Breast epithelium (tissue), 4 donors: ENCODE measurements at regions of chr6 and their contacts with region 1.

Region 1: DNA sequence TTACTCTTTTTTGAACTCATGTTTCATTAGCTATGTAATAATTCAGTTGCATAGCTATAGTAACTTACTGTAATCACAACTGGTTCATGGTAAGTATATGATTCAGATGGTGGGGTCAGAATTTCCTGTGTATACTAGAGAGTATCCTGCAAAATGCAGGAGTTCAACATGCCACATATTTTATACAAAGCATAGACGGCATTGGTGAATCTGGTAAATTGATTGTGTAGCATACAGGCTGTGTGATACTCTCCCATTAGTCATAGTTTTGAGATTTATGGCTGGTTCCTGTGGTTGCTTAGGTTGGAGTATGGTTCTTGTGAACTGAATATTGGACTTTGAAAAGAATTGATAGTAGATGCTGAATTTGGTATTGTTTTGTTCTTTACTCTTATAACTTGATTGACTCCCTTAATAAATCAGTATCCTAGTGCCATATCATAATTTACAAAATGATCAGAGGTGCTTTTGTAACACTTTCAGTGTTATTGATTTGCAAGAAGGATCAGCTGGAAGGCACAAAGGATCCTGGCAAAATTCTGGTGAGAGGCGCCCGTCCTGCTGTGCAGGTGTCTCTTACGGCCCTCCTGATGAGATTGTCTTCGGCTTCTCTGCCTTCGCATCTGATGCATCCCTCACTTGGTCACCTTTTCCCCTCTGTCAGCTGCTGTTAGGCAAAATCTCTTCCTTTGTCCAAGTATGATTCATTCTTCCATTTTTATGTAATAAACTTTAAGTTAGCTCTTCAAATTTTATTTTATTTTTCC is 22.6 kb downstream of the SNX9 start:
- DNase-seq: no peak
- H3K4me3 ChIP-seq: no peak overlapping the region
- H3K27ac ChIP-seq: no peak overlapping the region
- H3K4me1 ChIP-seq: peaks cover 0 to 6% of the 10 kb centered on the region in 2 donors
- H3K27me3 ChIP-seq: no peaks in the 10 kb centered on the region
- CTCF ChIP-seq: no peak
- POLR2A ChIP-seq: no peak

Region 2: GRCh38 chr6:157110607-157111006 is 735.1 kb before region 1 on chr6:
- intact Hi-C with region 1: loop called (anchors 5 kb)
- DNase-seq: no peak
- H3K4me3 ChIP-seq: no peak overlapping the region
- H3K27ac ChIP-seq: no peak overlapping the region
- H3K4me1 ChIP-seq: peaks cover 0 to 10% of the 10 kb centered on the region in 2 donors
- H3K27me3 ChIP-seq: no peaks in the 10 kb centered on the region
- CTCF ChIP-seq: no peak
- POLR2A ChIP-seq: no peak